ENCODE measurements at regions of chr19 and their contacts with region 1.

Region 1: GRCh38 chr19:43668406-43669158 is 1.4 kb downstream of the PLAUR start:
- DNase-seq: peak; percentile 98
- H3K4me3 Mint-ChIP-seq: peak overlapping the region; percentile 81
- H3K27ac Mint-ChIP-seq: peak overlapping the region; percentile 63
- H3K4me1 Mint-ChIP-seq: peaks cover 41% of the 10 kb centered on the region
- H3K27me3 Mint-ChIP-seq: no peaks in the 10 kb centered on the region

Region 2: DNA sequence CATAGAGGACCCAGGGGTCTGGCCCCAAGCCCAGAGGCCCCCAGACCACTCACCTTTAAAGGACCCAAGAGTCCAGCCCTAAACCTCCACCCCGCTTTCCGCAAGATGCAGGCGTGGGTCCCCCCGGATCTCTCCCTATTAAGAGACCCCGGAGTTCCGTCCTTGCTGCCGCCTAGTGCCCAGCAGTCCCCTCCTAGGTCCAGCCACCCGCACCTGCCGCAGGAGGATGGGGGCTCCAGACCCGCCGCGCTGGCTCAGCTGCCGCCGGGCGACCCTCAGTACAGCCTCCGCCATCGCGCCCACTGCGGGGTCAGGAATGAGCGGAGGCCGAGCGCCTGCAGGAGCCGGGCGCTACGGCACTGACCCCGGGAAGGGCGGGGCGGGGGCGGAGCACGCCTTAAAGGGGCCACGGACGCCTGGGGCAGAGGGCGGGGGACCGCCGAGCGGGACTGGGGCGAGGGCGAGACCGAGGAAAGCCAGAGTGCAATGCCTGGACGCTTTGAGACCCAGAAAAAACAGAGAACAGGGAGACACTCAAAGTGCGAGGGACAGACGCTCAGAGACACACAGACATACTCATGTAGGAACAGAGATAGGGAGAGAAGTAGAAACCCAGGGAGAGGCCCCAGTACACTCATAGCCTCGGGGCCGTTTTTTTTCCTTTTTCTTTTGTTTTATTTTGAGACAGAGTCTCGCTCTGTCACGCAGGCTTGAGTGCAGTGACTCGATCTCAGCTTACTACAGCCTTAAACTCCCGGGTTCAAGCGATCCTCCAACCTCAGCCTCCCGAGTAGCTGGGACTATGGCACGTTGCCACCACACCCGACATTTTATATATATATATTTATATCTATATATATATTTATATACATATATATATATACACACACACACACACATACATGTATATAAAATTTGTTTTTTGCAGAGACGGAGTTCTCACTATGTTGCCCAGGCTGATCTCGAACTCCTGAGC is 141.4 kb before region 1 on chr19 and contains the start of gene ETHE1:
- CTCF ChIA-PET with region 1: interaction called, 3 read pairs
- POLR2A ChIA-PET with region 1: no interaction called
- intact Hi-C with region 1: loop called (anchors 2 kb)
- DNase-seq: peak; percentile 85
- H3K4me3 Mint-ChIP-seq: peak within 1 kb of the TSS; percentile 92
- H3K27ac Mint-ChIP-seq: peak within 1 kb of the TSS; percentile 98
- H3K4me1 Mint-ChIP-seq: peaks cover 24% of the 10 kb centered on the region
- H3K27me3 Mint-ChIP-seq: no peaks in the 10 kb centered on the region
- total RNA-seq, gene ETHE1: 104 to 112 TPM

Region 3: GRCh38 chr19:43619262-43620060 is 49.1 kb before region 1 on chr19 and contains the start of gene ZNF428:
- CTCF ChIA-PET with region 1: interaction called, 4 read pairs
- POLR2A ChIA-PET with region 1: interaction called, 4 read pairs
- intact Hi-C with region 1: loop called (anchors 1 kb)
- DNase-seq: peak; percentile 92
- H3K4me3 Mint-ChIP-seq: peak within 1 kb of the TSS; percentile 97
- H3K27ac Mint-ChIP-seq: peak within 1 kb of the TSS; percentile 98
- H3K4me1 Mint-ChIP-seq: peaks cover 14% of the 10 kb centered on the region
- H3K27me3 Mint-ChIP-seq: no peaks in the 10 kb centered on the region
- total RNA-seq, gene ZNF428: 11.7 to 12.5 TPM

Region 4: DNA sequence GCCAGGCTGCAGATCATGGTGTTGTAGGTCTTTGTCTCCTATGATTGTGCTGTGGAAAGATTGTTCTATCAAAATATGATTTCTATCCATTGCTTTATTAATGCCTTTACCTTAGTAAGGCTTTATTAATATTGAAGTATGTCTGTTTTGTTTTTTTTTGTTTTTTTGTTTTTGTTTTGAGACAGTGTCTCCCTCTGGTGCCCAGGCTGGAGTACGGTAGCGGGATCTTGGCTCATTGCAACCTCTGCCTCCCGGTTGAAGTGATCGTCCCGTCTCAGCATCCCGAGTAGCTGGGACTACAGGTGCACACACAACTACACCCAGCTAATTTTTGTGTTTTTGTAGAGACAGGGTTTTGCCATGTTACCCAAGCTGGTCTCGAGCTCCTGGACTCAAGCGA is 55.0 kb after region 1 on chr19:
- CTCF ChIA-PET with region 1: interaction called, 13 read pairs
- POLR2A ChIA-PET with region 1: no interaction called
- intact Hi-C with region 1: loop called (anchors 5 kb)
- DNase-seq: no peak
- H3K4me3 Mint-ChIP-seq: no peak overlapping the region
- H3K27ac Mint-ChIP-seq: no peak overlapping the region
- H3K4me1 Mint-ChIP-seq: peaks cover 5% of the 10 kb centered on the region
- H3K27me3 Mint-ChIP-seq: no peaks in the 10 kb centered on the region

Region 5: DNA sequence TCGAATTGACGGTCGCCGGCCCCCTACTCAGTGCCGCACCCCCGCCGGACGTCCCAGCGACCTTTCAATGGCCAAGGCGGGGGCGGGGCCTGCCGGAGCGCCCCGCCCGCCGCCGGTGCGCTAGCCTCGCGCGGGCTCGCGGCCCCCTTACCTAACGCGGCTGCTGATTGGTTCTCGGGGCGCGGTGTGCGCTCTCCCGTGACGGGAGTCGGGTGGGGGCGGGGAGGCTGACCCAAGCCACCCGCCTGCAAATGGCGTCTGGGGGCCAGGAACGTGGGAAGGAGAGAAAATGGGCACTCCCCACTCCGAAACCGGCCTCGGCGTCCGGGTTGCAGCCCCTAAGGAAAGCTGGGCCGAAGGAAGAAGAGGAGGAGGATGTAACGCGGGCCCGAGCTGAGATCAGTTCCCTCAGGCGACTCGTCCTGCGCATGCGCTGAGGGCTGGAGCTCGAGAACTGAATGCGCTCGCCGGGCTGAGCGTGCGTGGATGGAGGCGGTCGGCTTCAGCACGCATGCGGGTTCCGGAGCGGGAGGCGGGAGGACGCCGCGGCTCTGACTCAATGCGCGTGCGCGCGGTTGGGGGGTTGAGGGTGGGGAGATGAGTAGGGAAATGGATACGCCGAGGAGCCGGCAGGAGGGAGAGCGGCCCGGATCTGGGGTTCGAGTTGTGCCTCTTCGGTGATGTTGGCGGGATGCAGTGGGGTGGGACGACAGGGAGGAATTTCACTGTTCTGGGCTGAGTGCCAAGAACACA is 86.1 kb after region 1 on chr19 and contains the start of gene SMG9:
- CTCF ChIA-PET with region 1: interaction called, 9 read pairs
- POLR2A ChIA-PET with region 1: interaction called, 9 read pairs
- intact Hi-C with region 1: loop called (anchors 1 kb)
- DNase-seq: peak; percentile 99
- H3K4me3 Mint-ChIP-seq: peak within 1 kb of the TSS; percentile 95
- H3K27ac Mint-ChIP-seq: peak within 1 kb of the TSS; percentile 99
- H3K4me1 Mint-ChIP-seq: peaks cover 63% of the 10 kb centered on the region
- H3K27me3 Mint-ChIP-seq: no peaks in the 10 kb centered on the region
- total RNA-seq, gene SMG9: 58.2 to 58.3 TPM

Region 6: GRCh38 chr19:43777163-43777700 is 108.7 kb after region 1 on chr19:
- CTCF ChIA-PET with region 1: interaction called, 9 read pairs
- POLR2A ChIA-PET with region 1: interaction called, 11 read pairs
- intact Hi-C with region 1: loop called (anchors 1 kb)
- DNase-seq: peak; percentile 62
- H3K4me3 Mint-ChIP-seq: peak overlapping the region; percentile 80
- H3K27ac Mint-ChIP-seq: peak overlapping the region; percentile 92
- H3K4me1 Mint-ChIP-seq: peaks cover 57% of the 10 kb centered on the region
- H3K27me3 Mint-ChIP-seq: no peaks in the 10 kb centered on the region